Heart left ventricle (tissue), 16 donors: ENCODE measurements at regions of chr20 and their contacts with region 1.

Region 1: DNA sequence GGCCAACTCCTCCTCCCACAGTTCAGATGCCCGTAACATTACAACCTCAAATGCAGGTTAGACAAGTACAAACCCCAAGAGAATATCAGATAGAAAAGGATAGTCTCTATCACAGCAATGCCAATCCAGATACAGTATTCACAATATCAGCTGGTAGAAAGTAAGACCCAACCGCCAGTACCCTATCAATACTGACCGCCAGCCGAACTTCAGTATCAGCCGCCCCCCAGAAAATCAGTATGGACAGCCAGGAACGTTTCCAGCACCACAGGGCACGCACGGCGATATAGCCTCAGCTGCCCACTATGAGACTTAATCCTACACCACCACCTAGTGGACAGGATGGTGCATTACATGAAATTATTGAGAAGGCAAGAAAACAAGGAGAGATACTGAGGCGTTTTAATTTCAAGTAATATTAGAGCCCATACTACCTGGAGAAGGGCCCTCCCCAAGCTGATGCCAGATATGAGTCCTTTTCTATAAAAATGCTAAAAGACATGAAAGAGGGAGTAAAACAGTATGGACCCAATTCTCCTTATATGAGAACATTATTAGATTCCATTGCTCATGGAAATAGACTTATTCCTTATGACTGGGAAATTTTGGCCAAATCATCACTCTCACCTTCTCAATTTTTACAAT is 17.6 kb upstream of the EIF2S2 start:
- DNase-seq: peak in 4 of 5 donors; percentile 41 to 57 (median 48)
- ATAC-seq: peak; percentile 47 to 88 (median 80)
- H3K4me3 ChIP-seq: no peak overlapping the region
- H3K27ac ChIP-seq: no peak overlapping the region
- H3K4me1 ChIP-seq: peaks cover 0 to 4% (median 0%) of the 10 kb centered on the region in 12 donors
- H3K27me3 ChIP-seq: no peaks in the 10 kb centered on the region
- CTCF ChIP-seq: peak; percentile 76 to 91 (median 86)
- POLR2A ChIP-seq: no peak

Region 2: GRCh38 chr20:33791959-33792597 is 337.6 kb before region 1 on chr20:
- intact Hi-C with region 1: loop called in 1 of 10 experiments (anchors 10 kb)
- DNase-seq: peak in 2 of 5 donors; percentile 43 to 75
- ATAC-seq: peak in 1 of 4 donors; percentile 24
- H3K4me3 ChIP-seq: no peak overlapping the region
- H3K27ac ChIP-seq: peak overlapping the region in 8 of 12 donors; percentile 26 to 78 (median 60)
- H3K4me1 ChIP-seq: peaks cover 0 to 39% (median 28%) of the 10 kb centered on the region in 12 donors
- H3K27me3 ChIP-seq: no peaks in the 10 kb centered on the region
- CTCF ChIP-seq: peak; percentile 70 to 83 (median 78)
- POLR2A ChIP-seq: no peak

Region 3: DNA sequence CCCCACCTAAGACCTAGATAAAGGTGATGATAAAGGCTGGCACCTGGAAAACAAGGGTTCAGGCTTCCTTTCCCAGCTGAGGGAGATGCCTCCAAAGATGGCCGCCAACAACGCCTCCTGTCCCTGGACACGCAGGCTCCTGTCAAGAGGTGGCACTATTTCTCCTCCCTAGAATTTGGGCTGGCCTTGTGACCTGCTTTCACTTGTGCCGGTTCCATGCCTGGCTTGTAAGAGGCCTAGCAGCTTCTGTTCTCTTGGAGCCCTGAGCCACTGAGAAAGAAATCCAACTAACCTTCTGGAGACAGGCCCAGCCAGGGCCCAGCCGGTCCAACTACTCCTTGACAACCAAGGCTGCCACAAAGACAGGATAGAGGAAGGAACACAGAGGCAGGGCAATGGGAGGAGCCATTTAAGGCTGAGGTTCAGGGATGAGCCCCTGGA is 196.2 kb before region 1 on chr20:
- intact Hi-C with region 1: loop called in 6 of 10 experiments (anchors 5 to 10 kb)
- DNase-seq: peak; percentile 45 to 66 (median 61)
- ATAC-seq: peak; percentile 78 to 92 (median 92)
- H3K4me3 ChIP-seq: no peak overlapping the region
- H3K27ac ChIP-seq: peak overlapping the region in 5 of 12 donors; percentile 12 to 70 (median 30)
- H3K4me1 ChIP-seq: peaks cover 0 to 3% (median 0%) of the 10 kb centered on the region in 12 donors
- H3K27me3 ChIP-seq: no peaks in the 10 kb centered on the region
- CTCF ChIP-seq: peak; percentile 33 to 71 (median 53)
- POLR2A ChIP-seq: no peak

Region 4: DNA sequence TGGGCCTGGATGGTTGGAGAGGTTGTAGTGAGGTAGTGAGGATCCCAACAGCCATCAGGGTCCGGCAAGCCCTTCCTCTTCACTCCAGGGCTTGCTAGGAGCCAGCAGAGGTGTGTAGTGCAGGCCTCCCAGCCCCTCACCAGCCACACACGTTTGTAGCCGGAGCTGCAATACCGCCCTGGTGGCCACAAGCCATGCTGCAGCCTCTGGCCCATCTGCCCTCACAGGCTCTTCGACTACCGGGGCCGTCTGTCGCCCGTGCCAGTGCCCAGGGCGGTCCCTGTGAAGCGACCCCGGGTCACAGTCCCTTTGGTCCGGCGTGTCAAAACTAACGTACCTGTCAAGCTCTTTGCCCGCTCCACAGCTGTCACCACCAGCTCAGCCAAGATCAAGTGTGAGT is 54.0 kb before region 1 on chr20:
- intact Hi-C with region 1: loop called in 4 of 10 experiments (anchors 5 to 10 kb)
- DNase-seq: no peak
- ATAC-seq: no peak
- H3K4me3 ChIP-seq: no peak overlapping the region
- H3K27ac ChIP-seq: no peak overlapping the region
- H3K4me1 ChIP-seq: peaks cover 0 to 7% (median 0%) of the 10 kb centered on the region in 12 donors
- H3K27me3 ChIP-seq: no peaks in the 10 kb centered on the region
- CTCF ChIP-seq: peak in 2 of 12 donors; percentile 17 to 19
- POLR2A ChIP-seq: no peak